Natural killer cell (primary cell): ENCODE measurements at regions of chr1 and their contacts with region 1.

Region 1: GRCh38 chr1:55768327-55768952 is 553.3 kb upstream of the USP24 start:
- DNase-seq: no peak
- ATAC-seq: no peak
- H3K4me3 ChIP-seq: no peak overlapping the region
- H3K4me3 Mint-ChIP-seq: no peak overlapping the region
- H3K27ac ChIP-seq: no peak overlapping the region
- H3K27ac Mint-ChIP-seq: no peak overlapping the region
- H3K4me1 ChIP-seq: no peaks in the 10 kb centered on the region
- H3K4me1 Mint-ChIP-seq: no peaks in the 10 kb centered on the region
- H3K27me3 ChIP-seq: no peaks in the 10 kb centered on the region
- H3K27me3 Mint-ChIP-seq: peaks cover 0 to 7% of the 10 kb centered on the region in 2 donors
- CTCF ChIP-seq: no peak

Region 2: DNA sequence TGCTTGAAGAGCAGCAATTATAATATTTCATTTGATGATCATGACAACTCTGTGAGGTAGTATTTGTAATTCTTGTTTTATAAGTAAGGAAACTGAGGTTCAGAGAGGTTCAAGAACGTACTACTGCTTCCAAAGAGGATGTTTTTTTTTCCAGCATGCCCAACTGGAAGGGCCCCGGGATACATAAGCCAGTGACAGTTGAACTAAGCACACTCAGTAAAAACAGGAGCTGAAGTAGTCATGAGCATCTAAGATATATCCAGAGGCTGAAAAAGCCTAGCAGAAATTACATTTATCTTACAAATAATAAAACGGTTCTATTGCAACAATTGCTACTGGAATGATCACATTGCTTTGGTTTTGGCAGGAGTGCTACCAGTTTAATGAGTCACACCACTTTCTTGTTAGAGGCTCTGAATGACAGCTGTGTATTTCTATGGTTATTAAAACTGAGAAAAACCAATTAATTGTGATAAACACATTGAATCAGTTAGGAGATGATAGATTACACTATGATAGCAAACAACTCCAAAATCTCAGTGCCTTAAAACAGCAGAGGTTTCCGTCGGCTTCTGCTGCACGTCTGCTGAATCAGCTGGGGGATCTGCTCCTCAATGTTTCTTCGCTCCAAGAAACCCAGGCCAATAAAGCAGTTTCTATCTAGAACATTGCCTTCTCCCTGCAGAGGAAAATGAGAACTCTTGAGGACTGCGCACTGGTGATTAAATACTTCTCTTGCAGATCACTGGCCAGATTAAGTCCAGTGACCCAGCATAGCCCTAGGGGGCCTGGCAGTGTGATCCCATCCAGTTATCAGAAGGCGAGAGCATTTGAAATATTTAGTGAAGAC is 288.2 kb after region 1 on chr1:
- intact Hi-C with region 1: no loop called
- DNase-seq: no peak
- ATAC-seq: no peak
- H3K4me3 ChIP-seq: no peak overlapping the region
- H3K4me3 Mint-ChIP-seq: no peak overlapping the region
- H3K27ac ChIP-seq: no peak overlapping the region
- H3K27ac Mint-ChIP-seq: no peak overlapping the region
- H3K4me1 ChIP-seq: no peaks in the 10 kb centered on the region
- H3K4me1 Mint-ChIP-seq: no peaks in the 10 kb centered on the region
- H3K27me3 ChIP-seq: no peaks in the 10 kb centered on the region
- H3K27me3 Mint-ChIP-seq: peaks cover 0 to 2% of the 10 kb centered on the region in 2 donors
- CTCF ChIP-seq: no peak

Region 3: GRCh38 chr1:56125296-56125695 is 356.9 kb after region 1 on chr1:
- intact Hi-C with region 1: loop called (anchors 5 kb)
- DNase-seq: no peak
- ATAC-seq: no peak
- H3K4me3 ChIP-seq: no peak overlapping the region
- H3K4me3 Mint-ChIP-seq: no peak overlapping the region
- H3K27ac ChIP-seq: no peak overlapping the region
- H3K27ac Mint-ChIP-seq: no peak overlapping the region
- H3K4me1 ChIP-seq: no peaks in the 10 kb centered on the region
- H3K4me1 Mint-ChIP-seq: no peaks in the 10 kb centered on the region
- H3K27me3 ChIP-seq: no peaks in the 10 kb centered on the region
- H3K27me3 Mint-ChIP-seq: peaks cover 0 to 2% of the 10 kb centered on the region in 2 donors
- CTCF ChIP-seq: no peak